Common myeloid progenitor, CD34-positive (primary cell): ENCODE measurements at regions of chr18 and their contacts with region 1.

Region 1: DNA sequence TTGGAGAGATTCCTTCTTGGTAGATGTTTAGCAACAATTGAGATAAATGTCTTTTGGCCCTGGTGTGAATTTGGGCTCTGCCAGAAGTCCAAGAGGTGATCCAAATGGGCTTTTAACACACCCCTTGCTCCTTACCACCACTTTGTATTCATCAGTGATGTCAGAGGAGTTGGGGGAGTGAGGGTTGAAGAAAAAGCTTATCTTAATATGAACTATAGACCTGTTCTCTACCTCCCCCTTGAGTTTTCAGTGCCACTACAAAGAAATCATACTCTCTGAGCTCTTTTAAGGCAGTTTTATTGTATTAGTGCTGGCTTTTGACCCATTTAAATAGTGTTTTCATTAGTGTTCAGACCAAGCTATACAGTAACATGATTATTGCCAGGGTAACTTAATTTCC is 229.1 kb downstream of the PHLPP1 start:
- DNase-seq: peak; percentile 66 to 79 (median 78)
- H3K4me3 ChIP-seq: no peak overlapping the region
- H3K27ac ChIP-seq: no peak overlapping the region
- H3K4me1 ChIP-seq: peaks cover 8 to 25% (median 15%) of the 10 kb centered on the region in 4 experiments
- H3K27me3 ChIP-seq: no peaks in the 10 kb centered on the region

Region 2: DNA sequence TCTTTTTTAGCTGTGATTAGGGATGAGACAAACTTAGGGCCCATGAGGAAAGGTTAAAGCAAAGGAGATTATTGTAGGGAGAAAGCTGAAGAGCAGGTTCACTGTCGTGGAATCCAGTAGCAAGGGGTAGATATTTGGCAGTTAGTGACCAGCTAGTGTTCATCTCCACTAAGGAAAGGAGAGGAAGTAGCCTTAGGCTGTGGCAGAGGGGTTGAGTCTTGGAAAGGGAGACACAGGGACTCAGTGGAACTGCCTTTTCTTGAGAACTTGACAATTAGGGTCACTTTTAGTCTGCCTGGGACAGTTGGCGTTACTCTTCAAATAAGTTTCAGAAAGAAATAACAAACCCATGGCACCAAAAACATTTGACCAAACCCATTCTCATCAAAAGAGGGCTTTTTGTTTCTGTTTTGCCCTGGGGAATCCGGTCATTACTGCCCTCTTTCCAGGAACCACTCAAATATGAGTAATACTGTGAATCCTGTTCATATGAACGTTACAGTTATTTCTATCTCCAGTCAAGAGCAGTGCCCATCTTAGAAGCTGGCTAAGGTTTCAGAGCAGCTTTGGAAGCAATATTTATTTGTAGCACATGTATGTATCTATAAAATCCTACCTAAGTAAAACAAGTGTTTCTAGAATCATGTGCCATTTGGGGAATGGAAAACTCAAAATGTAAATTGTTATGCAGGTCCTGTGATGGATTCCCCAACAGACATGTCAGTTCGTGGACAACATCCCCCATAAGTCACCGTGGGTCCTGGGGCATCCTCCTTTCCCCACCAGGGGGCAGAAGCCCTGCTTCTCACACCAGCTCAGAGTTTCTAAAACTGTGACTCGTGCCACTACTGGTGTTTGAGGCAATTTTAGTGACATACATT is 306.4 kb before region 1 on chr18:
- CTCF ChIA-PET with region 1: interaction called, 11 read pairs
- POLR2A ChIA-PET with region 1: no interaction called
- DNase-seq: peak; percentile 67 to 81 (median 75)
- H3K4me3 ChIP-seq: no peak overlapping the region
- H3K27ac ChIP-seq: no peak overlapping the region
- H3K4me1 ChIP-seq: no peaks in the 10 kb centered on the region
- H3K27me3 ChIP-seq: no peaks in the 10 kb centered on the region

Region 3: DNA sequence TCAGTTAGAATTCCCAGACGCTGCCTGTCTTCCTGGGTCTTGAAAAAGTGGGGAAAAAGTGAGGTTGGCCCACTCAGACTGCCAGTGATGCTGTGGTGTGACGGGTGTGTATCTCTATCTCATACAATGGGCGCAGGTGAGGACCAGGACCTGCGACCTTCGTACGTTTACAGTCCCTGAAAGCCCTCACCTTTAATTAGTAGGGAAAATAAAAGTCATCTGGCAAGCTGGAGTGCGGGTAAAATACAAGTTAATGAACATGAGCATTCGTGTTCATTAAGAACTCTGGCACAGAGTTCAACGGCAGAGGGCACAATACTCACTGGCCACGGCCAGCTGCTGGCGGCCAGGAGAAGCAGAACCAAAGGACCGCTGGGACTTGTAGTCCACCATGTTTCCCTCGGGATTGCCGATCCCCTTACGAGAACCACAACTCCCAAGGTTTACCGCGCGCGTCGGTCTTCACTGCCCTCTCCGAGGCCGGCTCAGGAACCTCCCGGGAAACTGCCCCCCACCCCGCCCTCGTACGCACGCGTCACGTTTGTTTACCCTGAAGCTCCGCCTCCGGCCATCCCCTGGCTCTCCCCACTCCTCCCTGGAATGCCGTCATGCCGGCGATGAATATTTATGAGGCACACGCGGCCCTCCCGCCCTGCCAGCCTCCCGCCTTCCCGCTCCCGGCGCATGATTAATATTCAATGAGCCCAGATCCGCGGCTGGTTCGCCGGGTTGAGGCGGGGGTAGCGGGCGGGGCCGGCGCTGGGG is 229.6 kb before region 1 on chr18:
- CTCF ChIA-PET with region 1: interaction called, 16 read pairs
- POLR2A ChIA-PET with region 1: interaction called, 3 read pairs
- DNase-seq: peak; percentile 100
- H3K4me3 ChIP-seq: peak overlapping the region; percentile 58 to 95 (median 85)
- H3K27ac ChIP-seq: peak overlapping the region; percentile 70 to 72
- H3K4me1 ChIP-seq: peaks cover 13 to 36% (median 25%) of the 10 kb centered on the region in 4 experiments
- H3K27me3 ChIP-seq: no peaks in the 10 kb centered on the region

Region 4: GRCh38 chr18:62957885-62958472 is 13.5 kb after region 1 on chr18:
- CTCF ChIA-PET with region 1: interaction called, 12 read pairs
- POLR2A ChIA-PET with region 1: no interaction called
- DNase-seq: peak; percentile 46 to 70 (median 67)
- H3K4me3 ChIP-seq: no peak overlapping the region
- H3K27ac ChIP-seq: no peak overlapping the region
- H3K4me1 ChIP-seq: peaks cover 13 to 23% (median 19%) of the 10 kb centered on the region in 4 experiments
- H3K27me3 ChIP-seq: no peaks in the 10 kb centered on the region